RWPE1 (cell line): ENCODE measurements at regions of chr1 and their contacts with region 1.

Region 1: GRCh38 chr1:229558571-229559335 is at the start of gene ABCB10:
- DNase-seq: peak; percentile 97
- H3K27ac ChIP-seq: peak within 1 kb of the TSS; percentile 87
- CTCF ChIP-seq: peak; percentile 92

Region 2: DNA sequence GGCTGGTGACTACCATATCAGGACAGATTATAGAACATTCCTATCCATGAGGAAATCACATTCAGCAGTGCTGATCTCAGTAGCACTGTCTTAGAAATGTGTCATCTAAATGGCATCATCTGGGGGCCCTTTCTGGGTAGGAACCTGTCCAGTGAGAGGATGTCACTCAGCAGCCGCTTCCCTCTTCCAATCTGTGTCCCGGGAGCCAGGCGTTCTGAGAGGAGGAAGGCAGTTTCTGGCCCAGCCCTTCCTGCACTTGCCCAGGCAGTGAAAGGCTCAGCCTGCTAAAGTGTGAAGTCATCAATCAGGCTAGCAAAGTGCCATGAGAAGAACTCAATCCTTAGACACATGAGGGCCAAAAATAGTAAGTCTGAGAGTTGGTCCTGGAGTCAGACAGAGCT is 262.2 kb before region 1 on chr1:
- CTCF ChIA-PET with region 1: no interaction called
- POLR2A ChIA-PET with region 1: no interaction called
- DNase-seq: peak; percentile 61
- H3K27ac ChIP-seq: peak overlapping the region; percentile 62
- CTCF ChIP-seq: no peak

Region 3: DNA sequence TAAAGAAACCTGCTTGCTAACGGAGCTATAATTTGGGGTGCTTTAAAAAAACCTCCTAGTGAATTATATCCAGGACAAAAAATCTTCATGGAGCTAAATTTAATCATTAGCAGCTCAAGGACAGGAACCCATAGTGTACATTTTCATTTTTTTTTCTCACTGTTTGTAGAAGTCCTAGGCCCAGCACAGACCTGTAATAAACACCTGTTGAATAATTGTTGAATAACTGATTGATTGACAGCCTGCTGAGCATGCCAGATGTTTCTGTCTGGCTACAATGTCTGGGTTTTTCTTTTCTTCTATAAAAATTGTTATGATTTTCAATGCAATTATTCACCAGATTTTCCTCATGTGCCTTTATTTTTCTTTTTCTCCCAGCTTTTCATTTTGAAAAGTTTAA is 497.3 kb after region 1 on chr1:
- CTCF ChIA-PET with region 1: interaction called, 11 read pairs
- POLR2A ChIA-PET with region 1: no interaction called
- DNase-seq: no peak
- H3K27ac ChIP-seq: no peak overlapping the region
- CTCF ChIP-seq: no peak